Activated CD4-positive, alpha-beta memory T cell treated with anti-CD3 and anti-CD28 coated beads for 36 hours (primary cell): ENCODE measurements at regions of chr6 and their contacts with region 1.

Region 1: DNA sequence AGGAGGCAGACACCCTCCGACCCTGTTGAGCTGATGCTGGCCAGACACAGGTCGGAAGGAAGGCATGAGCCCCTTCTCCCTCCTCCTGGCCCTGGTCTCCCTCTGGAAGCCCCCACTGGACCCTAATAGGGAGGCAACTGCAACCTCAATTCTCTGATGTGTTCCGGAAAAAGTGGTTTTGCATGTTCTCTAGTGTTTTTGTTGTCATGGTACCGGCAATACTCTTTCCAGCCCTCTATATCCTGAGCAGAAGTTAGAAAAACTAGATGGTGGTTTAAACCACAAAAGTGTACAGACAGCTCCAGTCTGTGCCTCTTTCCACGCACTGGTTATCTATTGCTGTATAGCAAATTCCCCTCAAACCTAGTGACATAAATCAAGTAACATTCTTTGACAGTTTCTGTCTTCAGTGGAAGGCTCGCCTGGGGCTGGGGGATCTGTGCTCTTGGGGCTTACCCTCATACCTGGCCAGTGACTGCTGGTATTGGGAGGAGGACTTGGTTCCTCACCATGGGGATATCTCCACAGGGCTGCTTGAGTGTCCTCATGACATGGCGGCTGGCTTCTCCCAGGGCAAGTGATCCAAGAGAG is 37.0 kb downstream of the SYTL3 start:
- DNase-seq: peak; percentile 38
- H3K4me3 Mint-ChIP-seq: no peak overlapping the region
- H3K27ac Mint-ChIP-seq: peak overlapping the region; percentile 47
- H3K4me1 Mint-ChIP-seq: peaks cover 64% of the 10 kb centered on the region
- H3K27me3 Mint-ChIP-seq: no peaks in the 10 kb centered on the region

Region 2: DNA sequence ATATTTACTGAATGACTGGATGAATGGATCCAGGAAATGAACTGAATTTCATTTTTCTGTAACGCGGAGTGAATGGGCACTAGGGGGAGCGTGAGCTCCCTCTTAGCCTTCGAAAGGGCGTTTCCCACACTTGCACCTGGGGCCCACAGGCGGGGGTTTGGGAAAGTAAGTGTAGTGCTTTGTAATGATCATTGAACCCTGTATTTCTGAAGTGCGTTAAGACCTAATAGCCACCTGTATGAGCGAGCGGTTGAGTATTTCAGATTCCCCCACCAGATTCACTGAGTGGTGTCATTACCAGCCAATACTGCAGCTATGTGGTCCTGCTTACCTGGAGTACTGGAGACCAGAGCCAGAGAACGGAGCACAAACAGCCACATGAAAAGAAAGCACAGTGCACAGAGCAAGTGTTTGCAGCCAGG is 26.5 kb before region 1 on chr6:
- CTCF ChIA-PET with region 1: interaction called, 51 read pairs
- POLR2A ChIA-PET with region 1: no interaction called
- intact Hi-C with region 1: no loop called
- DNase-seq: peak; percentile 56
- H3K4me3 Mint-ChIP-seq: no peak overlapping the region
- H3K27ac Mint-ChIP-seq: no peak overlapping the region
- H3K4me1 Mint-ChIP-seq: peaks cover 35% of the 10 kb centered on the region
- H3K27me3 Mint-ChIP-seq: no peaks in the 10 kb centered on the region

Region 3: DNA sequence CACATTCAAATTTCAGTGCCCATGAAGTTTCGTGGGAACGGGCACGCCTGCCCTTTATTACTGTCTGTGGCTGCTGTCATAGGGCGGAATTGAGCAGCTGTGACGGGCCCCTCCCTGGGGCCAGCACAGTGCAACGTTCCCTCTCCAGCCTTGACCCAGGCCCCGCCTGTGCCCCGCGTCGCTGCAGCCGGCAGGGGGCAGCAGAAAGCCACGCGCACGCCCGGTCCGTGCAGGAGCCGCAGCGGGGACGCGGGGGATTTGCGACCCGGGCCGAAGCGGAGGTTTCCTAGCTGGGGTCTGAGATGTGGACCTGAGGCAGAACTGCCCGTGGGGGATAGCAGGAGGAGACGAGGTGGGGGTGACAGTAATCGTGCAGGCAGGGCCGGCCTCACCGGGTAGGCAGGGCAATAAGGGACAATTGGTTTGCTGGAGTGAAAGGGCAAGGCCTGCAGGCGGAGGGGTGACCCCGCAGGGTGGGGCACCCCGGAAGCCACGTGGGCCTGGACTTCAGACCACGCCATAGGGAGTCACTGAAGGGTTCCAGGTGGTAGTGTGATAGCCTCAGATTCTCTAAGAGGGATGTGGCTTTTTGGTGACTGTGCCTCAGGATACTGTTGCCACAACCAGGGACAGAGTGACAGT is 17.4 kb after region 1 on chr6:
- CTCF ChIA-PET with region 1: interaction called, 27 read pairs
- POLR2A ChIA-PET with region 1: no interaction called
- intact Hi-C with region 1: no loop called
- DNase-seq: peak; percentile 84
- H3K4me3 Mint-ChIP-seq: peak overlapping the region; percentile 57
- H3K27ac Mint-ChIP-seq: peak overlapping the region; percentile 33
- H3K4me1 Mint-ChIP-seq: peaks cover 11% of the 10 kb centered on the region
- H3K27me3 Mint-ChIP-seq: no peaks in the 10 kb centered on the region

Region 4: GRCh38 chr6:158718461-158719046 is 31.7 kb after region 1 on chr6:
- CTCF ChIA-PET with region 1: interaction called, 10 read pairs
- POLR2A ChIA-PET with region 1: no interaction called
- intact Hi-C with region 1: no loop called
- DNase-seq: no peak
- H3K4me3 Mint-ChIP-seq: no peak overlapping the region
- H3K27ac Mint-ChIP-seq: no peak overlapping the region
- H3K4me1 Mint-ChIP-seq: peaks cover 55% of the 10 kb centered on the region
- H3K27me3 Mint-ChIP-seq: no peaks in the 10 kb centered on the region